ENCODE measurements at regions of chr2 and their contacts with region 1.

Region 1: GRCh38 chr2:159118115-159118858 is 149.8 kb downstream of the TANC1 start:
- DNase-seq: peak; percentile 68
- CTCF ChIP-seq: peak; percentile 89

Region 2: GRCh38 chr2:158903711-158904443 is 214.4 kb before region 1 on chr2:
- CTCF ChIA-PET with region 1: interaction called, 77 read pairs
- POLR2A ChIA-PET with region 1: no interaction called
- DNase-seq: no peak
- CTCF ChIP-seq: no peak

Region 3: DNA sequence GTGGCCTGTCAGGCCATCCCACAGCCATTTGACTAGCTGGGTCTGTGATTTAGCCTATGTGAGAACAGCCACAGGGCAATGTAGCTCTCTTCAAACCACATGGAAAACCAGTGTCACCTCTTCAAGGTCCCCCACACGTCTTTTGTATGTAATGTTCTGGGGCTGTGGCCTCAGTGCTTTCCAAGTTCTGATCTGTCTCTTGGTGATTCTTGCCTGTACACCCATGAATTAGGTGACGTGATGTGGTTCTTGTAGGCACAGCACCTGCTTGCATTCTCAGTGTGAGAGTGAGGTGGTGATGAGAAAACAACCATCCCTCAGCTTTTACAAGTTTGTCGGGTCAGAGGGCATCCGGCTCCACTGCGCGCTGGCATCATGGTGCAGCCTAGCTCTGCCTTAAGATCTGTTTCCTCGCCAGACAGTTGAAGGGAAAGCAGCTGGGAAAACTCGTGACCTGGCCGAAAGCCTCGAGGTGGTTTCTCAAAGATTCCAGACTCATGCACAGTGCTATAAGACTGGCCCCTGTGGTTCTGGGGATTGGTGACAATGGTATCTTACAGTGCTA is 24.0 kb before region 1 on chr2:
- CTCF ChIA-PET with region 1: interaction called, 11 read pairs
- POLR2A ChIA-PET with region 1: no interaction called
- DNase-seq: no peak
- CTCF ChIP-seq: no peak

Region 4: GRCh38 chr2:159131914-159132281 is 13.6 kb after region 1 on chr2:
- CTCF ChIA-PET with region 1: interaction called, 30 read pairs
- POLR2A ChIA-PET with region 1: no interaction called
- DNase-seq: no peak
- CTCF ChIP-seq: no peak

Region 5: GRCh38 chr2:159140070-159140769 is 21.9 kb after region 1 on chr2:
- CTCF ChIA-PET with region 1: interaction called, 11 read pairs
- POLR2A ChIA-PET with region 1: no interaction called
- DNase-seq: no peak
- CTCF ChIP-seq: no peak

Region 6: GRCh38 chr2:159153463-159153862 is 35.2 kb after region 1 on chr2:
- CTCF ChIA-PET with region 1: interaction called, 11 read pairs
- POLR2A ChIA-PET with region 1: no interaction called
- DNase-seq: no peak
- CTCF ChIP-seq: no peak